B cell (primary cell): ENCODE measurements at regions of chr14 and their contacts with region 1.

Region 1: DNA sequence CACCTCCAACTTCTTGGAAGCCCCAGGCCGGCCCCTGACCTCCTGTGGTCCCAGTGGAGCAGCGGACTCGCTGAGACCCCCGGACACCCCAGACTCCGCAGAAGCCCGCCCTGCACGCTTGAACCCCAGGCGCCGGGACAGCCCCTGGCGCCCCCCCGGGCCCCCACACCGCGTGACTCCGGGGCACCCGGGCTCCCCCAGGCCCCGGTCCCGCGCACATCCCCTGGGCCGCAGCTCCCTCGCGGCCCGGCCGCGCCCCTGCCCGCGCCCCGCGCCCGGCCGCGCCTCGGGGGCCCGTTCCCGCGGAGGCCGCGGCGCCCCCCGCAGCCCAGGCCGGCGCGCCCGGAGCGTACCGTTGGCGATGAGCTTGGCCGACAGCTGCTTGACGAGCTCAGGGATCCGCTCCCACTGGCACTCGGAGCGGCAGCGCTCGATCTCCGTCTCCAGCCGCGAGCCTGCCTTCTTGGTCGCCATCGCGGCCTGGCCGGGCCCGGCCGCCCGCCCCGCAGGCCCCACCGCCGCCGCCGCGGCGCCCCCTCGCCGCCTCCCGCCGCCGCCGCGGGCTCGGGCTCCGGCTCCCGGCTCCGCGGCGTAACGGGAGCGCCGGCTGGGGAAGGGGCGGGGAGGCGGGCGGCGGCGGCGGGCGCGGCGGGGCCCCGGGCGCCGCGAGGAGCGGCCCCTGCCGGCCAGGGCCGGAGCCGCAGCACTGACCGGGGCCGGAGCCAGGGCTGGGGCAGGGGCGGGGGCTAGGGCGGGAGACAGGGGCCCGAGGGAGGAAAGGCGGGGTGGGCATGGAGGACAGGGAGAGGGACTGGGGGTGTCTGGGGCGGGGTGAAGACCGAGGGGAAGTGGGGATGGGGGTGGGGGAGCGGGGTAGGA is at the start of gene TTC7B:
- DNase-seq: peak; percentile 50
- ATAC-seq: peak; percentile 93
- H3K4me3 ChIP-seq: peak within 1 kb of the TSS in 3 of 5 experiments; percentile 28 to 52 (median 37)
- H3K4me3 Mint-ChIP-seq: peak within 1 kb of the TSS; percentile 90
- H3K27ac ChIP-seq: no peak within 1 kb of the TSS
- H3K27ac Mint-ChIP-seq: no peak within 1 kb of the TSS
- H3K4me1 ChIP-seq: peaks cover 9% of the 10 kb centered on the region in 2 donors
- H3K4me1 Mint-ChIP-seq: peaks cover 3% of the 10 kb centered on the region
- H3K27me3 ChIP-seq: peaks cover 0 to 18% (median 2%) of the 10 kb centered on the region in 4 experiments
- H3K27me3 Mint-ChIP-seq: peaks cover 11% of the 10 kb centered on the region
- CTCF ChIP-seq: no peak
- total RNA-seq, gene TTC7B: 2.1 and 3.2 TPM in 2 replicates

Region 2: GRCh38 chr14:88895116-88895515 is 1920.9 kb before region 1 on chr14:
- CTCF ChIA-PET with region 1: no interaction called
- POLR2A ChIA-PET with region 1: no interaction called
- intact Hi-C with region 1: no loop called
- DNase-seq: no peak
- ATAC-seq: no peak
- H3K4me3 ChIP-seq: no peak overlapping the region
- H3K4me3 Mint-ChIP-seq: no peak overlapping the region
- H3K27ac ChIP-seq: no peak overlapping the region
- H3K27ac Mint-ChIP-seq: no peak overlapping the region
- H3K4me1 ChIP-seq: no peaks in the 10 kb centered on the region
- H3K4me1 Mint-ChIP-seq: no peaks in the 10 kb centered on the region
- H3K27me3 ChIP-seq: peaks cover 0 to 4% (median 0%) of the 10 kb centered on the region in 4 experiments
- H3K27me3 Mint-ChIP-seq: peaks cover 22% of the 10 kb centered on the region
- CTCF ChIP-seq: no peak

Region 3: DNA sequence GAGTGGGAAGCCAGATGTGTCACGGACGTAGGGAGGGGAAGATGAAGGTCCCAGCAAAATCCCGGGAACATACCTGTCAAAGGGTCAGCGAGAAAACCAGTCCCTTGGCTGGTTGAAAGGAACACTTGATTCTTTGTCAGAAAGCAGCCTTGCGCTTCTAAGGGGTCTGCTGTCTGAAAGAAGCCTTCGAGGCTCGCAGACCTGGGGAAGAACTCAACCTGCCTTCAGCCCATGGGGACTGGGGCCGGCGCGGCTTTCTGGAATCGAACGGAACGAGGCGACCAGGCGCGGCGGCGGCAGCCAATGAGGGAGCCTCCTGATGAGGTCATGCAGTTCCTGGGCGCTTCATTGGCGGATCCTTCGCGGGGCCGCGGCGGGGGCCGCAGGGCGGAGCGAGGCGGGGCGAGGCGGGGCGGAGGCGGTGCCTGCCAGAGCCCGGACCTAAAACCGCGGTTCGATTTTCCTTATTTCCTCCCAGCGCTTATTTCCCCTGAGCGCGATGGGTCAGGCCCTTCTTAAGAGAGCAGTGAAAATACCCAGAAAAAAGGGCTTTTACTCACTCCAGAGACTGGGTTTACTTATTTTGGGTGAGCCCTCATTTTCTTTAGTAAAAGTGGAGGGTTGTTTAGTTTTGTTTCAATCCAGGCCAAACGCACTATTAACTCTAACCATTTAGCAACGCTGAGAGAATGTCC is 12.0 kb after region 1 on chr14:
- CTCF ChIA-PET with region 1: no interaction called
- POLR2A ChIA-PET with region 1: no interaction called
- intact Hi-C with region 1: loop called (anchors 1 kb)
- DNase-seq: peak; percentile 92
- ATAC-seq: peak; percentile 100
- H3K4me3 ChIP-seq: peak overlapping the region; percentile 44 to 58 (median 51)
- H3K4me3 Mint-ChIP-seq: peak overlapping the region; percentile 77
- H3K27ac ChIP-seq: peak overlapping the region; percentile 61 to 75
- H3K27ac Mint-ChIP-seq: peak overlapping the region; percentile 80
- H3K4me1 ChIP-seq: peaks cover 13 to 16% of the 10 kb centered on the region in 2 donors
- H3K4me1 Mint-ChIP-seq: peaks cover 16% of the 10 kb centered on the region
- H3K27me3 ChIP-seq: no peaks in the 10 kb centered on the region
- H3K27me3 Mint-ChIP-seq: no peaks in the 10 kb centered on the region
- CTCF ChIP-seq: no peak